Mucosa of descending colon (tissue), 3 donors: ENCODE measurements at regions of chr2 and their contacts with region 1.

Region 1: DNA sequence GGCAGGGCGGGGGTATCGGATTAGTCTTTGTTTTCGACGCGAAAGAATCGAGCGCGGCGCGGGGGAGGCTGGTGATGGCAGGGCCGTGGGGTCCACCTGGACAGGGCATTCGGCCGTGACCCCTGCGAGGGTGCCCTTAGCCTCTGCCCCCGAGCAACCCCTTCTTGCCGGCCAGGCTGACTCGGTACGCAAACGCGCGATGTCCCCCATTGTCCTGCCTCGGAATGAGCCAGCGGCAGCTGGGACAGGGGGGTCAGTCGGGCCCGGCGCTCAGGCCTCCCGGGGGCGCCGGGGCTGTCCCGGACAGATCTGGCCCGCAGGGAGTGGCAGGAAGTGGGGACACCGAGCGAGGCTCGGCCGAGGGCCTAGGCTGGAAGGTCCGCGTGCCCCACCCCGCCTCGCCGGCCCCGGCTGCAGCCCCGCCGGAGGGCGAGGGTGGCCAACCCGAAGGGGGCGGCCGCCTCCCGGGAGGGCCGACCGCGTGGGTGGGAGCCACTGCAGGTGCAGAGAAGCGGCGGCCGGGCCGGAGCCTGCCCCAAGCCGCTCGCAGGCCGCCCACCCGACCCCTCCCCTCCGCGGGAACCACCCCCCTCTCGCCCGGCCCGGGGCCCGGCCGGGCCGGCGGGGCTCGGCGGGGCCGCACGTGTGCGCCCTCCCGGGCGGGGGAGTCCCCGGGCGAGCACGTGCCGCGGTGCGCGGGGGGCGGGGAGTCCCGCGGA is at the start of gene TET3:
- DNase-seq: peak; percentile 67 to 82 (median 80)
- ATAC-seq: peak; percentile 46
- H3K4me3 ChIP-seq: peak within 1 kb of the TSS; percentile 56
- H3K4me1 ChIP-seq: peaks cover 56% of the 10 kb centered on the region
- CTCF ChIP-seq: no peak
- total RNA-seq, gene TET3: 16.6 to 28.7 (median 21.9) TPM

Region 2: DNA sequence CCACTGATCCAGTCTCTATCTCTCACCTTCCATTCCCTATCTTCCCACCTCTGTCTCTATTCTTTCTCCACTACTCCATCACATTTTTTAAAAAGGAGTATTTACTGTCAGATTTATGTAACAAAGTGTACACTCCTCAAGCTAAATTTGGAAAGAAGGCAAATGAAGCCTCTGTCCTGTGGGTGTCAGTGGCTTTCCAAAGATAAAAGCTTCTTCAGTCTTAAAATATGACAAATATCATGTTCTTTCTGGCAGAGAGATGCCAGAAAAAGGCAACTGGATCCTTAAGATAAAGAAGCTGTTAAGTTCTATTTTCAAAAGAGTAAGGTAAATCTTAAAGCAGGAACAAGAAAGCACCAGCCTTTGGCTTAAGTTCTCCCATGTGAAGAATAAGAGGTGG is 211.5 kb before region 1 on chr2:
- intact Hi-C with region 1: no loop called
- DNase-seq: no peak
- ATAC-seq: no peak
- H3K4me3 ChIP-seq: no peak overlapping the region
- H3K4me1 ChIP-seq: no peaks in the 10 kb centered on the region
- CTCF ChIP-seq: no peak

Region 3: GRCh38 chr2:73926493-73927338 is 57.6 kb before region 1 on chr2 and contains the start of gene DGUOK:
- intact Hi-C with region 1: loop called in 1 of 2 experiments (anchors 5 kb)
- DNase-seq: peak; percentile 95 to 99 (median 98)
- ATAC-seq: peak; percentile 92
- H3K4me3 ChIP-seq: peak within 1 kb of the TSS; percentile 31
- H3K4me1 ChIP-seq: peaks cover 39% of the 10 kb centered on the region
- CTCF ChIP-seq: no peak
- total RNA-seq, gene DGUOK: 36.5 to 61.3 (median 57.8) TPM